ENCODE measurements at regions of chr19 and their contacts with region 1.

Region 1: GRCh38 chr19:1039646-1040475 is at the start of gene ABCA7:
- DNase-seq: peak; percentile 99
- H3K4me3 ChIP-seq: peak within 1 kb of the TSS; percentile 85
- H3K27ac ChIP-seq: peak within 1 kb of the TSS; percentile 97
- H3K4me1 ChIP-seq: peaks cover 49% of the 10 kb centered on the region
- CTCF ChIP-seq: peak; percentile 27; the same call in 1 of the 2 replicates
- total RNA-seq, gene ABCA7: 22.5 and 43.3 TPM in 2 replicates

Region 2: GRCh38 chr19:1026189-1027019 is 13.5 kb before region 1 on chr19 and contains the start of gene CNN2:
- CTCF ChIA-PET with region 1: interaction called, 3 read pairs
- POLR2A ChIA-PET with region 1: interaction called, 15 read pairs
- intact Hi-C with region 1: loop called (anchors 2 kb)
- DNase-seq: peak; percentile 76
- H3K4me3 ChIP-seq: peak within 1 kb of the TSS; percentile 88
- H3K27ac ChIP-seq: peak within 1 kb of the TSS; percentile 77
- H3K4me1 ChIP-seq: peaks cover 48% of the 10 kb centered on the region
- CTCF ChIP-seq: no peak
- total RNA-seq, gene CNN2: 51.5 and 73.7 TPM in 2 replicates

Region 3: DNA sequence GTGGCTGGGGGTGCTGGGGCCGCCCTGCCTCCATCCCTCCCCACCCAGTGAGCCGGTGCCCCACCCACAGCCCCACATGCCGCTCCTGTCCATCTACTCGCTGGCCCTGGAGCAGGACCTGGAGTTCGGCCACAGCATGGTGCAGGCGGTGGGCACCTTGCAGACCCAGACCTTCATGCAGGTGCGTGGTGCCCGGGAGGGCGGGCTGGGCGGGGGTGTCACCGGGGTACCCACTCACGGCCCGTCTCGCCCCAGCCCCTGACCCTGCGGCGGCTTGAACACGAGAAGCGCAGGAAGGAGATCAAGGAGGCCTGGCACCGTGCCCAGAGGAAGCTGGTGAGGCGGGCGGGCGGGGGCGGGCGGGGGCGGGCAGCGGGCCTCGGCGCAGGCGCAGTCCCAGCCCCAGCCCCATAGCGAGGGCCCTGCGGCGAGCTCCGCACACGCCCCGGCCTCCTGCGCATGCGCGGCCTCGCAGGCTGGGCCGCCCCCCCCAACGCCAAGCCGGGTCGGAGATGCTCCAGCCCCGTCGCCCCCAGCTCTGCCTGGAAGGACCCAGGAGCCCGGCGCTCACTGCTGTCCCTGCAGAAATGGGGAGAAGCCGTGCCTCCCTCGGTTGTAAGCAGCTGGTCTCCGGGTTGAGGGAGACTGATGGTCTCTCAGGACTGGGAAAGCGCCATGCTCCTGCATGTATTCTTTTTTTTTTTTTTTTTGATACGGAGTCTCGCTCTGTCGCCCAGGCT is 34.9 kb after region 1 on chr19:
- CTCF ChIA-PET with region 1: interaction called, 14 read pairs
- POLR2A ChIA-PET with region 1: interaction called, 4 read pairs
- intact Hi-C with region 1: loop called (anchors 2 kb)
- DNase-seq: peak; percentile 90
- H3K4me3 ChIP-seq: peak overlapping the region; percentile 58
- H3K27ac ChIP-seq: peak overlapping the region; percentile 90
- H3K4me1 ChIP-seq: peaks cover 52% of the 10 kb centered on the region
- CTCF ChIP-seq: no peak

Measured in OCI-LY7 (cell line).